Natural killer cell (primary cell): ENCODE measurements at regions of chr7 and their contacts with region 1.

Region 1: GRCh38 chr7:143214789-143215679 is 6.8 kb upstream of the TAS2R40 start:
- DNase-seq: peak; percentile 29 to 91
- ATAC-seq: peak; percentile 94 to 99 (median 99)
- H3K4me3 ChIP-seq: no peak overlapping the region
- H3K4me3 Mint-ChIP-seq: no peak overlapping the region
- H3K27ac ChIP-seq: no peak overlapping the region
- H3K27ac Mint-ChIP-seq: no peak overlapping the region
- H3K4me1 ChIP-seq: no peaks in the 10 kb centered on the region
- H3K4me1 Mint-ChIP-seq: no peaks in the 10 kb centered on the region
- H3K27me3 ChIP-seq: no peaks in the 10 kb centered on the region
- H3K27me3 Mint-ChIP-seq: peaks cover 0 to 10% of the 10 kb centered on the region in 2 donors
- CTCF ChIP-seq: peak; percentile 100

Region 2: GRCh38 chr7:142632291-142633134 is 582.5 kb before region 1 on chr7:
- intact Hi-C with region 1: loop called (anchors 1 kb)
- DNase-seq: peak; percentile 56 to 84
- ATAC-seq: peak; percentile 88 to 99 (median 95)
- H3K4me3 ChIP-seq: no peak overlapping the region
- H3K4me3 Mint-ChIP-seq: no peak overlapping the region
- H3K27ac ChIP-seq: no peak overlapping the region
- H3K27ac Mint-ChIP-seq: peak overlapping the region in 1 of 2 donors; percentile 15
- H3K4me1 ChIP-seq: peaks cover 3% of the 10 kb centered on the region
- H3K4me1 Mint-ChIP-seq: peaks cover 16 to 20% of the 10 kb centered on the region in 2 donors
- H3K27me3 ChIP-seq: no peaks in the 10 kb centered on the region
- H3K27me3 Mint-ChIP-seq: peaks cover 7 to 9% of the 10 kb centered on the region in 2 donors
- CTCF ChIP-seq: peak; percentile 82

Region 3: DNA sequence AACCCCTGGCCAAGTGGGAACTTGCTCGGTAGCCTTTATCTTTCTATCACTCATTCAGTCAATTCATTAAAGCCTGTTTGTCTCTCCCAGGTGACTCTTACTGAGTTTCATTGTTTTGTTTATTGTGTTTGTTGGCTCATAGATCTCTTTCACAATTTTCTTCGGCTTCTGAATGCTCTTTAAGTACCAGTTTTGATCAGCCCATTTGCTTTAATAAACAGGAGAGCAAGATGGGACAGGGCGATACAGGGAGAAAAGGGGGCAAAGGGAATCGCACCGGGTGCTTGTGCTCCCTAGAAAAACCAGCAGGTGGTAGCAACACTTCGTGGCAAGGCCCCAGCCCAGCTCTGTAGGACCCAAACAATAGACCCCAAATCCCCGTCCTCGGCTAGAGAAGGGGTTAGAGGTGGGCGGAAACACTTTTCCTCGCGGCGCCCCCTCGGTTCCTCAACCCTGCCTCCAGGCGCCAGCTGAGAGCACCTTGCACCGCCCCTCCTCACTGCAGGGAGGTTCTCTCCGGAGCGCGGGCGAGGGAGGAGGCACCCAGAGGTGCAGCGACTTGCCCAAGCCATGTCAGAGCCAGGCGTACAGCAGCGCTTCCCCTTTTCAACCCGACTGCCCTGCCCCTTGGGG is 361.2 kb before region 1 on chr7:
- intact Hi-C with region 1: loop called (anchors 2 kb)
- DNase-seq: peak; percentile 49 to 77
- ATAC-seq: peak; percentile 76 to 85 (median 79)
- H3K4me3 ChIP-seq: peak overlapping the region; percentile 88
- H3K4me3 Mint-ChIP-seq: peak overlapping the region; percentile 95
- H3K27ac ChIP-seq: peak overlapping the region; percentile 27
- H3K27ac Mint-ChIP-seq: peak overlapping the region; percentile 60 to 85
- H3K4me1 ChIP-seq: peaks cover 17% of the 10 kb centered on the region
- H3K4me1 Mint-ChIP-seq: peaks cover 10 to 16% of the 10 kb centered on the region in 2 donors
- H3K27me3 ChIP-seq: peaks cover 3% of the 10 kb centered on the region
- H3K27me3 Mint-ChIP-seq: peaks cover 0 to 6% of the 10 kb centered on the region in 2 donors
- CTCF ChIP-seq: peak; percentile 73